ENCODE measurements at regions of chr11 and their contacts with region 1.

Region 1: DNA sequence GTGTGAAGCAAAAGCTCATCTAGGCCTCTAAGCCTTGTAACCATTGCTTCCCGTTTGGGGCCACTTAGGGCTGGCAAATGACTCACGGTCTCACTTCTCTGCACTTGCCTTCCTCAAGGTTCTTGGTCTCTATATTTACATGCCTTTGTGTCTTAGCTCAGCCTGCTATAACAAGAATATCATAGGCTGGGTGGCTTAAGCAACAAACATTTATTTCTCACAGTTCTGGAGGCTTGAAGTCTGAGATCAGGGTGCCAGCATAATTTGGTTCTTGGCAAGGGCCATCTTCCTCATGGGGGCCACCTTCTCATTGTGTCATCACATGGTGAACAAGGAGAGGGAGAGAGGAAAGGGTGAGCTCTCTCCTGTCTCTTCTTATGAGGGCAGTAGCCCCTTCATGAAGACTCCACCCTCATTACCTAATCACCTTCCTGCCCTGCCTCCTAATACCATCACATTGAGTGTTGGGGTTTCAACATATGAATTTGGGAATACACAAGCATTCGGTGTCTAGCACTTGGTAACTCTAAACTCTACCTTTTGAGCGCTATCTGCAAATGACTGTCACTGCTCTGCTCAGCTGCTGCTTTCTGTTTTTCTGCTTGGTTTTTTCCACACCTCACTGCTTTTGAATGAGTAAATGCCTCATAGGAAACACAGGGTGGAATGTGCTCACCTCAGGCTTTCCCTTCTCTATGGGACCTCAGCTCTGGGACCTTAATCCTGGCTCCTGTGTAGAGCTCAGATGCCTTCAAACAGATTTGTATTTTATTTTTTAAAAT is 16.2 kb upstream of the ME3 start:
- DNase-seq: peak; percentile 12
- H3K4me3 Mint-ChIP-seq: peak overlapping the region; percentile 60
- H3K27ac Mint-ChIP-seq: peak overlapping the region; percentile 92
- H3K4me1 Mint-ChIP-seq: peaks cover 26% of the 10 kb centered on the region
- H3K27me3 Mint-ChIP-seq: peaks cover 8% of the 10 kb centered on the region

Region 2: GRCh38 chr11:86499721-86500141 is 188.9 kb before region 1 on chr11:
- intact Hi-C with region 1: loop called (anchors 5 kb)
- DNase-seq: no peak
- H3K4me3 Mint-ChIP-seq: no peak overlapping the region
- H3K27ac Mint-ChIP-seq: no peak overlapping the region
- H3K4me1 Mint-ChIP-seq: no peaks in the 10 kb centered on the region
- H3K27me3 Mint-ChIP-seq: peaks cover 11% of the 10 kb centered on the region

Region 3: DNA sequence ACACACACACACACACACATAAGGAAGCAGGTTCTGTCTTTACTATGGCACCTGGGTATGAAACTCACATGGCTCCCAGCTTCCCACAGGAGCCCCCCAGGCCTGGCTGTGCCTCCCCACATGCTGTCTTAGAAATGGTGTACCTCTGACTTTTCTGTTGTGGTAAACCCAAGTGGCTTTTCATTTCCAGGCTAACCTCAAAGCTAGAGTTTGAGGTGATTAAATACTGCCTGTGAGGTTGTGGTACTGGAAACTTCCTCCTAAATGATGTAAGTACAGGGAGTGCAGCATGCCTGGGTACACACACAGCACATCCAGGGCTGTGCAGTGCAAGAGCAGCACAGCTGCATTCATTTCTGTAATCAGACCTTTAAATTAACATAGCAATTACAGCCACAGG is 50.6 kb before region 1 on chr11:
- intact Hi-C with region 1: loop called (anchors 1 kb)
- DNase-seq: peak; percentile 40
- H3K4me3 Mint-ChIP-seq: no peak overlapping the region
- H3K27ac Mint-ChIP-seq: peak overlapping the region; percentile 33
- H3K4me1 Mint-ChIP-seq: peaks cover 51% of the 10 kb centered on the region
- H3K27me3 Mint-ChIP-seq: peaks cover 20% of the 10 kb centered on the region

Region 4: GRCh38 chr11:86671682-86672621 is 16.6 kb before region 1 on chr11 and contains the start of gene ME3:
- intact Hi-C with region 1: loop called (anchors 1 kb)
- DNase-seq: peak; percentile 47
- H3K4me3 Mint-ChIP-seq: peak within 1 kb of the TSS; percentile 83
- H3K27ac Mint-ChIP-seq: peak within 1 kb of the TSS; percentile 79
- H3K4me1 Mint-ChIP-seq: peaks cover 18% of the 10 kb centered on the region
- H3K27me3 Mint-ChIP-seq: peaks cover 31% of the 10 kb centered on the region
- total RNA-seq, gene ME3: 12.8 and 13.1 TPM in 2 replicates

Region 5: GRCh38 chr11:86910592-86910991 is 222.0 kb after region 1 on chr11:
- intact Hi-C with region 1: no loop called
- DNase-seq: no peak
- H3K4me3 Mint-ChIP-seq: no peak overlapping the region
- H3K27ac Mint-ChIP-seq: no peak overlapping the region
- H3K4me1 Mint-ChIP-seq: no peaks in the 10 kb centered on the region
- H3K27me3 Mint-ChIP-seq: peaks cover 17% of the 10 kb centered on the region

Measured in activated T-helper 1 cell treated with anti-CD3 and anti-CD28 coated beads, Interleukin-12 subunit alpha, Interleukin-12 subunit beta, Interleukin-2, Interleukin-4 antibody, amounts not matched to agents 30 ng/mL and 10 ng/mL and 1 ng/mL, durations not matched to agents 14 hours and 24 hours and 36 hours (primary cell).